ENCODE measurements at regions of chr1 and their contacts with region 1.

Region 1: GRCh38 chr1:25520446-25521061 is 22.9 kb upstream of the LDLRAP1 start:
- DNase-seq: peak; percentile 34
- H3K4me3 ChIP-seq: no peak overlapping the region
- H3K27ac ChIP-seq: no peak overlapping the region
- H3K4me1 ChIP-seq: peaks cover 5% of the 10 kb centered on the region
- H3K27me3 ChIP-seq: no peaks in the 10 kb centered on the region
- CTCF ChIP-seq: peak; percentile 70 to 73

Region 2: GRCh38 chr1:25239681-25240541 is 280.6 kb before region 1 on chr1:
- CTCF ChIA-PET with region 1: no interaction called
- dilution Hi-C with region 1: no loop called
- in situ Hi-C with region 1: no loop called
- intact Hi-C with region 1: loop called (anchors 10 kb)
- DNase-seq: peak; percentile 87
- H3K4me3 ChIP-seq: peak overlapping the region; percentile 33 to 49 (median 45)
- H3K27ac ChIP-seq: peak overlapping the region; percentile 72
- H3K4me1 ChIP-seq: peaks cover 33% of the 10 kb centered on the region
- H3K27me3 ChIP-seq: no peaks in the 10 kb centered on the region
- CTCF ChIP-seq: peak; percentile 40 to 75

Region 3: GRCh38 chr1:25430666-25431505 is 89.7 kb before region 1 on chr1 and contains the start of gene MACO1:
- CTCF ChIA-PET with region 1: no interaction called
- dilution Hi-C with region 1: loop called (anchors 5 kb)
- in situ Hi-C with region 1: no loop called
- intact Hi-C with region 1: loop called (anchors 10 kb)
- DNase-seq: peak; percentile 94
- H3K4me3 ChIP-seq: peak within 1 kb of the TSS; percentile 72 to 91 (median 87)
- H3K27ac ChIP-seq: peak within 1 kb of the TSS; percentile 88
- H3K4me1 ChIP-seq: peaks cover 14% of the 10 kb centered on the region
- H3K27me3 ChIP-seq: no peaks in the 10 kb centered on the region
- CTCF ChIP-seq: no peak
- total RNA-seq, gene MACO1: 16.8 to 17.4 TPM

Region 4: GRCh38 chr1:25503551-25504426 is 16.8 kb before region 1 on chr1:
- CTCF ChIA-PET with region 1: no interaction called
- dilution Hi-C with region 1: no loop called
- in situ Hi-C with region 1: no loop called
- intact Hi-C with region 1: loop called (anchors 1 kb)
- DNase-seq: peak; percentile 21
- H3K4me3 ChIP-seq: no peak overlapping the region
- H3K27ac ChIP-seq: no peak overlapping the region
- H3K4me1 ChIP-seq: no peaks in the 10 kb centered on the region
- H3K27me3 ChIP-seq: no peaks in the 10 kb centered on the region
- CTCF ChIP-seq: peak; percentile 56 to 75

Region 5: DNA sequence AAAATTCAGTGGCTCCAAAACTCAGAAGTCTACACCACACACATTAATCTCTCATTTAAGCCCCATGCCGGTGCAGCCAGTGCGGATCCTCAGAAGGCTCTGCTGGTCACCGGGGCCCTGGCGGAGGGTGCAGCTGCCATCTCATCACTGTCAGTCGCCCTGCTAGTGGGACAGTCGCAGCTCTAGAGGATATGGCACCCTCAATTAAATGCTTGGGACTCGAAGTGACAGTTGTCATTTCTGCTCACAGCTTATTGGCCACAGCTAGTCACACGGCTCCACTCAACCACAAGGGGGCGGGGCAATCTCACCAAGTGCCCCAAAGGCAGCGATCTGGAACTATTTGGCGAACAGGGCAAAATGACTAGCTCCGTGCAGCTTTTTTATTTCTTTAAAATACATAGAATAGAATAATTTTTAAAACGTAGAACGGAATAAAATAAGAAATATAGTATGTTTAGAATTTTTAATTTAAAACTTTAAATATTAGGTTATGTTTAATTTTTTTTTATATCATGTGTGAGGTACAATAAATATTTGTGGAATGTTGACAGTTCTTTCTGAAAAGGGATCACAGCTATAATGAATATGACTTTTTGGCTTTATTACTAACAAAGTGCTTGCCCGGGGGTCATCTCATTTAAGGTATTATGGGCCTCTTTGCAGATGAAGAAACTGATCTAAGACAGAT is 88.1 kb after region 1 on chr1:
- CTCF ChIA-PET with region 1: no interaction called
- dilution Hi-C with region 1: loop called (anchors 5 kb)
- in situ Hi-C with region 1: no loop called
- intact Hi-C with region 1: no loop called
- DNase-seq: peak; percentile 45
- H3K4me3 ChIP-seq: peak overlapping the region in 2 of 3 experiments; percentile 38 to 43
- H3K27ac ChIP-seq: no peak overlapping the region
- H3K4me1 ChIP-seq: peaks cover 3% of the 10 kb centered on the region
- H3K27me3 ChIP-seq: no peaks in the 10 kb centered on the region
- CTCF ChIP-seq: peak; percentile 17 to 65

Region 6: GRCh38 chr1:25796811-25797458 is 276.4 kb after region 1 on chr1:
- CTCF ChIA-PET with region 1: no interaction called
- dilution Hi-C with region 1: no loop called
- in situ Hi-C with region 1: no loop called
- intact Hi-C with region 1: loop called (anchors 1 kb)
- DNase-seq: peak; percentile 59
- H3K4me3 ChIP-seq: no peak overlapping the region
- H3K27ac ChIP-seq: no peak overlapping the region
- H3K4me1 ChIP-seq: peaks cover 15% of the 10 kb centered on the region
- H3K27me3 ChIP-seq: no peaks in the 10 kb centered on the region
- CTCF ChIP-seq: peak; percentile 74 to 89